ENCODE measurements at regions of chr22 and their contacts with region 1.

Region 1: DNA sequence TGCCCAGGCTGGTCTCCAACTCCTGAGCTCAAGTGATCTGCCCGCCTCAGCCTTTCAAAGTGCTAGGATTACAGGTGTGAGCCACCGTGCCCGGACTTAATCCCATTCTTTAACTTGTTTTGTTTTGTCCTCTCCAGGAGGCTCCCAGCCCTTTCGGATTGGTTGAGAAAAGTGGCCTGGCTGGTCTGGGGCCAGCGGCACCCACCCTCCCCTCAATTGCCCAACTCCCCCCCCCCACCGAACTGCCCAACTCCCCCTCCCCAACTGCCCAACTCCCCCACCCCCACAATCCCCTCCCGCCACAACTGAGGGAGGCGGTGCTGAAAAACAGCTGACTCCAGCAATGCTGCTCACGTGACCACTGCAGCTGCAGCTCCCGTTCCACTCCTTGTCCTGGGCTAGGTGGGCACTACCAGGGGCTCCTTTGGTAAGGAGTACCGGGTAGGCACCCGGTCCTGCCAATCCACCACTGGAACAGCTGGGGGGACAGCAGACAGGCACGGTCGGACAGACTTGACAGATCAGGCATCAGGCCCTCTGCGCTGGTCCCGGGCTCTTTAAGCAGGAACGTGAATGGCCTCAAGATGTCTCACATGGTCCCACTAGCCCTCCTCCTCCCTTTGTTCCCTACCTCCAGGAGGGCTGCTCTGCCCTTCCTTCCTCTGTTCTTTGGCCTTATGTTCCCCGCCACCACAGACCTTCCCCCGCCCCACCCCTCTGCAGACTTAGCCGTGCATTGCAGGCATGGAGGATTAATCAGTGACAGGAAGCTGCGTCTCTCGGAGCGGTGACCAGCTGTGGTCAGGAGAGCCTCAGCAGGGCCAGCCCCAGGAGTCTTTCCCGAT is at the start of gene TCN2:
- DNase-seq: peak; percentile 83
- H3K4me3 ChIP-seq: peak within 1 kb of the TSS; percentile 11 to 55 (median 35)
- H3K27ac ChIP-seq: peak within 1 kb of the TSS; percentile 73
- H3K4me1 ChIP-seq: peaks cover 37% of the 10 kb centered on the region
- H3K27me3 ChIP-seq: no peaks in the 10 kb centered on the region
- CTCF ChIP-seq: no peak
- POLR2A ChIP-seq: peak; percentile 84
- total RNA-seq, gene TCN2: 62.3 and 80.6 TPM in 2 replicates

Region 2: DNA sequence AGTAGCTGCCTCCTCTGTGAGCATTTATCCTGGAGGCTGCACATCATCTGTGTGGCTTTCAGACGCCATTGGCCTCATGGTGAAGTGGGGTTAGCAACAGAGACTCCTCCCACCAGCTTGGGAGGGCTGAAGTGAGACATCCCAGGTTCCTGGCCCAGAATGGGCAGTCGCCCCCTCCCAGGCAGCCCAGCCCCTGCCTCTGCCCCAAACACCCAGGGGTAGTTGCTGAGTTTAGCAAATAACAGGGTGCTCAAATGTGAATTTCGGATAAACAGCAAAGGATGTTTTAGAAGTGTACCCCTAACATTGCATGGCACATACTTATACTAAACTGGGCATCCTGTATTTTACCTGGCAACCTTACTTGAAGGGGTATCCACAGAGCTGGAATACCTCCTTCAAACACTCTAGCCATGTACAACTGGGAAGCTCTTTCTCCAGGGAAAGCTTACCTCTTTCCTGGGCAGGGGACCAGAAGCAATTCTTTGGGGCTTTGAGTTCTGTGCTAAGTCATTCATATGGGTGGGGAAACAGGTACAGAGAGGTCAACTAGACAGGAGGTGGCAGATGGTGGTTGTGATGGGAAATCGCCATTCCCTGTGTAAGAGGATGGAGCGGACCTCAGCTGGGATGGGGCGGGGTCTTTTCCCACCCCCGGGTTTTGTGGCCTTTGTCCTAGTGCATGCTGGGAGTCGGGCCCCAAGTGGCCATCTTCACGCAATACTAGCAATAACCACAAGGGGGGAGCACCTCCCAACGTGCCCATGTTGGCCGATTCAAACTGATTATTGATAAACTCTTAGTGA is 161.8 kb before region 1 on chr22:
- CTCF ChIA-PET with region 1: interaction called, 15 read pairs
- POLR2A ChIA-PET with region 1: no interaction called
- dilution Hi-C with region 1: no loop called
- intact Hi-C with region 1: loop called (anchors 1 kb)
- DNase-seq: peak; percentile 76
- H3K4me3 ChIP-seq: no peak overlapping the region
- H3K27ac ChIP-seq: no peak overlapping the region
- H3K4me1 ChIP-seq: no peaks in the 10 kb centered on the region
- H3K27me3 ChIP-seq: no peaks in the 10 kb centered on the region
- CTCF ChIP-seq: peak; percentile 77 to 83
- POLR2A ChIP-seq: peak; percentile 21

Region 3: GRCh38 chr22:30556388-30556787 is 50.3 kb before region 1 on chr22:
- CTCF ChIA-PET with region 1: interaction called, 7 read pairs
- POLR2A ChIA-PET with region 1: no interaction called
- dilution Hi-C with region 1: no loop called
- intact Hi-C with region 1: loop called (anchors 1 kb)
- DNase-seq: no peak
- H3K4me3 ChIP-seq: no peak overlapping the region
- H3K27ac ChIP-seq: no peak overlapping the region
- H3K4me1 ChIP-seq: no peaks in the 10 kb centered on the region
- H3K27me3 ChIP-seq: no peaks in the 10 kb centered on the region
- CTCF ChIP-seq: no peak
- POLR2A ChIP-seq: no peak

Region 4: GRCh38 chr22:30591588-30592359 is 14.9 kb before region 1 on chr22 and contains the start of gene PES1:
- CTCF ChIA-PET with region 1: interaction called, 10 read pairs
- POLR2A ChIA-PET with region 1: interaction called, 8 read pairs
- dilution Hi-C with region 1: no loop called
- intact Hi-C with region 1: loop called (anchors 1 kb)
- DNase-seq: peak; percentile 99
- H3K4me3 ChIP-seq: peak within 1 kb of the TSS; percentile 68 to 93 (median 72)
- H3K27ac ChIP-seq: peak within 1 kb of the TSS; percentile 95
- H3K4me1 ChIP-seq: peaks cover 10% of the 10 kb centered on the region
- H3K27me3 ChIP-seq: no peaks in the 10 kb centered on the region
- CTCF ChIP-seq: no peak
- POLR2A ChIP-seq: no peak
- total RNA-seq, gene PES1: 106 and 110 TPM in 2 replicates

Region 5: DNA sequence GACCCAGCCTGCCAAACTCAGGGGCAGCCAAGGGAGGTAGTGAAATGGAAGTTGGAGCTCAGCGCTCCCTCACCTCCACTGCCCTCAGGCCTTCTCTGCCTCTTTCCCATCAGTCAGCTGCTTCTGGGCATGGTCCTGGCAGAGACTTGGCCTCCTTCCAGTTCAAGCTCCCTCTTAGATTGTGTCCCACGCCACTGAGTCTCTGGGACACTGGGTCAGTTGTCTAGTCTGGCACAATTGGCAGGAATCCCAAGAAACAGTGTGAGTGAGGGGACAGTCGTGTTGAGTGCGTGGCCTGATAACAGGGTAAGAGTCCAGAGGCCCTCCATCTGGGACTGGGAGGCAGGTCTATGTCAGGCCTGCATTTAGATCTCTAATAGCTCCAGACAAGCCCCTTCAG is 21.8 kb after region 1 on chr22:
- CTCF ChIA-PET with region 1: interaction called, 51 read pairs
- POLR2A ChIA-PET with region 1: no interaction called
- dilution Hi-C with region 1: no loop called
- intact Hi-C with region 1: no loop called
- DNase-seq: no peak
- H3K4me3 ChIP-seq: no peak overlapping the region
- H3K27ac ChIP-seq: no peak overlapping the region
- H3K4me1 ChIP-seq: peaks cover 19% of the 10 kb centered on the region
- H3K27me3 ChIP-seq: no peaks in the 10 kb centered on the region
- CTCF ChIP-seq: no peak
- POLR2A ChIP-seq: no peak

Region 6: DNA sequence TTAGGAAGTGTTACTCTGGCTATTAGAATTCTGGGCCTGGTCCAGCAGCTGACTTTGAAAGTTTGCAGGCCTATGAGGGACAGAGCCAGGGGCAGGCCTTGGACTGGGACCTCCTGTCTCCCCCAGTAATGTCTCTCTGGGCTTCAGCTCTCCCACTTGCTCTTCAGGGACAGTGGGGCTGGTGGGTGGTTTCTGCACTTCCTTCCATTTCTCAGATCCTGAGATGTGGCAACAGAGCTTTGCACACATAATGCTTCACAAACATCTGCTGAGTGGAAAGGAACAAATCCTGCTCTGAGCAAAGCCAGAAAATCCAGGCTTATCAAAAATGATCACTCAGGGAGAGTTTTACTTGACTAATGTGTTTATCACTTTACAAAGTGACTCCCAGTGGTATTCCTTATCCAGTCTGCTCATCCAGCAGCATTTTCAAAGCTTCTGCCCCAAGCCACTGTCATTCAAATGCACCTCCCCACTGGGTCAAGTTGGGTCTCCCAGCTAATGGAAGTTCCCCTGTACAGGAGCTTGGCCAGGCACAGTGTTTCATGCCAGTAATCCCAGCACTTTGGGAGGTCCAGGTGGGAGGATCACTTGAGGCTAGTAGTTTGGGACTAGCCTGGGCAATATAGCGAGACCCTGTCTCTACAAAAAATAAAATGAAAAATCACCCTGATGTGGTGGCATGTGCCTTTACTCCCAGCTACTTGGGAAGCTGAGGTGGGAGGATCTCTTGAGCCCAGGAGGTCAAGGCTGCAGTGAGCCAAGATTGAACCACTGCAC is 74.5 kb after region 1 on chr22:
- CTCF ChIA-PET with region 1: no interaction called
- POLR2A ChIA-PET with region 1: no interaction called
- dilution Hi-C with region 1: no loop called
- intact Hi-C with region 1: no loop called
- DNase-seq: no peak
- H3K4me3 ChIP-seq: no peak overlapping the region
- H3K27ac ChIP-seq: no peak overlapping the region
- H3K4me1 ChIP-seq: no peaks in the 10 kb centered on the region
- H3K27me3 ChIP-seq: no peaks in the 10 kb centered on the region
- CTCF ChIP-seq: no peak
- POLR2A ChIP-seq: no peak

Region 7: DNA sequence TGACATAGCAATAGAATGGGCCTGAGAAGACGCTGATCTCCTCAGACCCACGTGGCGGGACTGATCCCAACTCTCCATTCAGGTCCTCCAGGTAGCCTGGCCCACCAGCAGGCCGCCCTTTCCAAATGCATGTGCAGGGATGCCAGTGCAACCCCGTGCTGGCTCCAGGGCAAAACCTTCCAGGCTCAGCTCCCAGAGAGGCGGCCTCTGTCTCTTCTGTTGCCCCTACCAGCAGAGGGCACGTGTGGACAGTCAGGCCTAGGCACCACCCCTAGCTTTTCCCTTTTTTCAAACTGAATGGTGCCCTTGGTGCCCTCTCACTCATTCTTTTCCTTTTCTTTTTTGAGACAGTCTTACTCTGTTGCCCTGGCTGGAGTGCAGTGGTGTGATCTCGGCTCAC is 209.7 kb after region 1 on chr22:
- CTCF ChIA-PET with region 1: no interaction called
- POLR2A ChIA-PET with region 1: no interaction called
- dilution Hi-C with region 1: no loop called
- intact Hi-C with region 1: no loop called
- DNase-seq: no peak
- H3K4me3 ChIP-seq: no peak overlapping the region
- H3K27ac ChIP-seq: no peak overlapping the region
- H3K4me1 ChIP-seq: no peaks in the 10 kb centered on the region
- H3K27me3 ChIP-seq: peaks cover 8 to 9% of the 10 kb centered on the region in 2 experiments
- CTCF ChIP-seq: no peak
- POLR2A ChIP-seq: no peak